PC-9 (cell line): ENCODE measurements at regions of chr1 and their contacts with region 1.

Region 1: GRCh38 chr1:51070640-51071039 is 31.4 kb upstream of the C1orf185 start:
- DNase-seq: peak in 1 of 2 experiments; percentile 90
- H3K4me3 ChIP-seq: peak overlapping the region; percentile 9; the same call in 1 of the 2 replicates
- H3K27ac ChIP-seq: peak overlapping the region; percentile 94
- H3K4me1 ChIP-seq: peaks cover 28% of the 10 kb centered on the region
- H3K27me3 ChIP-seq: no peaks in the 10 kb centered on the region
- CTCF ChIP-seq: no peak

Region 2: GRCh38 chr1:50570066-50570468 is 500.6 kb before region 1 on chr1:
- CTCF ChIA-PET with region 1: no interaction called
- POLR2A ChIA-PET with region 1: interaction called, 17 read pairs
- intact Hi-C with region 1: no loop called
- DNase-seq: no peak
- H3K4me3 ChIP-seq: no peak overlapping the region
- H3K27ac ChIP-seq: no peak overlapping the region
- H3K4me1 ChIP-seq: no peaks in the 10 kb centered on the region
- H3K27me3 ChIP-seq: no peaks in the 10 kb centered on the region
- CTCF ChIP-seq: no peak

Region 3: GRCh38 chr1:51936531-51936930 is 865.9 kb after region 1 on chr1:
- CTCF ChIA-PET with region 1: no interaction called
- POLR2A ChIA-PET with region 1: no interaction called
- intact Hi-C with region 1: no loop called
- DNase-seq: peak in 1 of 2 experiments; percentile 9
- H3K4me3 ChIP-seq: no peak overlapping the region
- H3K27ac ChIP-seq: no peak overlapping the region
- H3K4me1 ChIP-seq: no peaks in the 10 kb centered on the region
- H3K27me3 ChIP-seq: no peaks in the 10 kb centered on the region
- CTCF ChIP-seq: no peak